Endothelial cell of umbilical vein (primary cell): ENCODE measurements at regions of chr2 and their contacts with region 1.

Region 1: DNA sequence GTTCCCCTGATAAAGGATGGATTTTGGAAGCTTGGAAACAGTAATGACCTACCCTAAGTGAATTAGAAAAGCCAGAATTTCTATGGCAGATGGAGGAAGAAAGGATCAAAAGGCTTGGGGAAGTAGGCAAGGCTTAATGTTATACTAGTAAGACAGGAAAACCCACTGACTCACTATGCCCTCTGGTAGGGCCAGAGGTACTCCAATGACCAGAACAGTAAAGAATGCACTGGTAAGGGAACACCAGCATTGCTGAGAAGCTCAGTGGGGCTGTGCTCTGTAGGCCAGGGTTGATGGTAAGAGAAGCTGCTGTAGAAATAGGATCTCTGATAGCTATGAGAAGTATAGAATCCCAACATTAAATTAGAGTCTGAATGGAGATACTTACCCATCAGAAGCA is 126.4 kb downstream of the GFPT1 start:
- DNase-seq: no peak
- H3K4me3 ChIP-seq: no peak overlapping the region
- H3K27ac ChIP-seq: no peak overlapping the region
- H3K4me1 ChIP-seq: no peaks in the 10 kb centered on the region
- H3K27me3 ChIP-seq: no peaks in the 10 kb centered on the region
- CTCF ChIP-seq: no peak
- POLR2A ChIP-seq: no peak

Region 2: DNA sequence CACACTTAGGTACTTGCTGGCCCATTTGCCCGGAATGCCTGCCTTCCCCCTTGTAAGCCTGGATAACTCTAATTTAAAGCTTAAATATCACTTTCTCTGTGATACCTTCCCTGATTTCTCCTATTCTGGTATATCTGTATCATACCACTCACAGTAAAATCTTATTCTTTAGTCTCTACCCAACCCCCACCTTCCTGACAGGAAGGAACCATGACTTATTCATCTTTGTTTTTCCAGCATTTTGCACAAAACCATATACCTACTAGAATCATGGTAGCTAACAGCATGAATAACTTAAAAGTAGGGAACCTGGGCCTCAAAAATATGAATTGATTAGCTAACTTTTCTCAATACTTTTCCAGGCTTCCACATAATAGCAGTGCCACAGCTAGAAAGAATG is 14.8 kb after region 1 on chr2:
- CTCF ChIA-PET with region 1: interaction called, 13 read pairs
- POLR2A ChIA-PET with region 1: interaction called, 3 read pairs
- dilution Hi-C with region 1: no loop called
- intact Hi-C with region 1: no loop called
- DNase-seq: peak; percentile 75
- H3K4me3 ChIP-seq: peak overlapping the region in 1 of 3 experiments; percentile 52
- H3K27ac ChIP-seq: peak overlapping the region; percentile 89
- H3K4me1 ChIP-seq: peaks cover 19% of the 10 kb centered on the region
- H3K27me3 ChIP-seq: no peaks in the 10 kb centered on the region
- CTCF ChIP-seq: no peak
- POLR2A ChIP-seq: no peak